B cell (primary cell): ENCODE measurements at regions of chr7 and their contacts with region 1.

Region 1: GRCh38 chr7:6435486-6436384 is 12.0 kb downstream of the DAGLB start:
- DNase-seq: peak; percentile 89
- ATAC-seq: peak; percentile 95
- H3K4me3 ChIP-seq: peak overlapping the region; percentile 20 to 57 (median 50)
- H3K4me3 Mint-ChIP-seq: peak overlapping the region; percentile 72
- H3K27ac ChIP-seq: peak overlapping the region; percentile 14 to 70
- H3K27ac Mint-ChIP-seq: peak overlapping the region; percentile 79
- H3K4me1 ChIP-seq: peaks cover 26 to 40% of the 10 kb centered on the region in 2 donors
- H3K4me1 Mint-ChIP-seq: peaks cover 39% of the 10 kb centered on the region
- H3K27me3 ChIP-seq: no peaks in the 10 kb centered on the region
- H3K27me3 Mint-ChIP-seq: no peaks in the 10 kb centered on the region
- CTCF ChIP-seq: peak; percentile 92

Region 2: DNA sequence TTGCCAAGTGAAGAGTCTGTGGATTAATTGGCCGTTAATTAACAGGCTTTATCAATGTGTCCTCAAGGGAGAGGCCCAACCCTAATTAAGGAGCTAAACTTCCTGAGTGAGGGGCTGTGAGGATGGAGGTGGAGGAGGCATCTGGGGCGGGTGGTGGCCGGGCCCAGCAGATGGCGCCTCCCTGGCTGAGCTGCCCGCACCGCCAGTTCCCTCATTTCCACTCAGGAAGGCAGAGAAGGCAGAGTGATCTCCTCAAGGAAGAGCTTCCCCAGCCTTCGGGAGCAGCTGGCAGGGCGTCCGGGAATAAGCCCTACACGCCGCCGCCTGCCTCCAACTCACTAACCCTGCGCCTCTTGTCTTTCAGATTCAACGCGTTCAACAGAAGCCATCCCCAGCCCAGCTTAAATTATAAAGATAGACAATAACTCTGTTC is 275.5 kb before region 1 on chr7:
- CTCF ChIA-PET with region 1: interaction called, 6 read pairs
- POLR2A ChIA-PET with region 1: no interaction called
- intact Hi-C with region 1: loop called (anchors 10 kb)
- DNase-seq: no peak
- ATAC-seq: no peak
- H3K4me3 ChIP-seq: no peak overlapping the region
- H3K4me3 Mint-ChIP-seq: no peak overlapping the region
- H3K27ac ChIP-seq: no peak overlapping the region
- H3K27ac Mint-ChIP-seq: no peak overlapping the region
- H3K4me1 ChIP-seq: no peaks in the 10 kb centered on the region
- H3K4me1 Mint-ChIP-seq: no peaks in the 10 kb centered on the region
- H3K27me3 ChIP-seq: no peaks in the 10 kb centered on the region
- H3K27me3 Mint-ChIP-seq: no peaks in the 10 kb centered on the region
- CTCF ChIP-seq: no peak

Region 3: DNA sequence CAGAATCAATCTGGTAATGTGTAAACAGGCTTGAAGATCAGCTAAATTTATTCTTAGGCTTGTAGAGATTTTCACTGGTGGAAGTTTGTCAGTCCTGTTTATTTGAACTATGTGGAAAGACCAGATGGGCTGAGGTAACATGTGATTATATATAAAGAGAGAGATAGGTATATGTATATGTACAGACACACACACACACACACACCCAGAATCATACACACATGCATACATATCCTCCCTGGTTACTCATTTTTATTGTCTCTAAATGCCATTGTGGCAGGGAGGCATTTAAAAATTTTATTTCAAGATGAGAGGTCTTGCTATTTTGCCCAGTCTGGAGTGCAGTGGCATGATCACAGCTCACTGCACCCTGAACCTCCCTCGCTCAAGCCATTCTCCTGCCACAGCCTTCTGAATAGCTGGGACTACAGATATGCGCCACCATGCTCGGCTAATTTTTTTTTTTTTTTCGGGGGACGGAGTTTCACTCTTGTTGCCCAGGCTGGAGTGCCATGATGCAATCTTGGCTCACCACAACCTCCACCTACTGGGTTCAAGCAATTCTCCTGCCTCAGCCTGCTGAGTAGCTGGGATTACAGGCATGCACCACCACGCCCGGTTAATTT is 85.2 kb before region 1 on chr7:
- CTCF ChIA-PET with region 1: interaction called, 9 read pairs
- POLR2A ChIA-PET with region 1: no interaction called
- intact Hi-C with region 1: loop called (anchors 1 kb)
- DNase-seq: peak; percentile 25
- ATAC-seq: no peak
- H3K4me3 ChIP-seq: no peak overlapping the region
- H3K4me3 Mint-ChIP-seq: peak overlapping the region; percentile 78
- H3K27ac ChIP-seq: peak overlapping the region in 1 of 2 donors; percentile 49
- H3K27ac Mint-ChIP-seq: peak overlapping the region; percentile 84
- H3K4me1 ChIP-seq: peaks cover 17 to 35% of the 10 kb centered on the region in 2 donors
- H3K4me1 Mint-ChIP-seq: peaks cover 24% of the 10 kb centered on the region
- H3K27me3 ChIP-seq: no peaks in the 10 kb centered on the region
- H3K27me3 Mint-ChIP-seq: no peaks in the 10 kb centered on the region
- CTCF ChIP-seq: no peak

Region 4: GRCh38 chr7:6447581-6448199 is 12.0 kb after region 1 on chr7 and contains the start of gene DAGLB:
- CTCF ChIA-PET with region 1: interaction called, 16 read pairs
- POLR2A ChIA-PET with region 1: interaction called, 5 read pairs
- intact Hi-C with region 1: loop called (anchors 1 kb)
- DNase-seq: peak; percentile 97
- ATAC-seq: peak; percentile 89
- H3K4me3 ChIP-seq: peak within 1 kb of the TSS; percentile 54 to 100 (median 85)
- H3K4me3 Mint-ChIP-seq: peak within 1 kb of the TSS; percentile 94
- H3K27ac ChIP-seq: peak within 1 kb of the TSS; percentile 80 to 81
- H3K27ac Mint-ChIP-seq: peak within 1 kb of the TSS; percentile 93
- H3K4me1 ChIP-seq: peaks cover 6 to 17% of the 10 kb centered on the region in 2 donors
- H3K4me1 Mint-ChIP-seq: peaks cover 29% of the 10 kb centered on the region
- H3K27me3 ChIP-seq: no peaks in the 10 kb centered on the region
- H3K27me3 Mint-ChIP-seq: no peaks in the 10 kb centered on the region
- CTCF ChIP-seq: no peak
- total RNA-seq, gene DAGLB: 27.6 and 29.6 TPM in 2 replicates